Activated naive CD4-positive, alpha-beta T cell treated with anti-CD3 and anti-CD28 coated beads for 36 hours (primary cell): ENCODE measurements at regions of chr13 and their contacts with region 1.

Region 1: GRCh38 chr13:30802953-30803478 is 67.7 kb downstream of the ALOX5AP start:
- DNase-seq: peak; percentile 88
- H3K4me3 Mint-ChIP-seq: peak overlapping the region; percentile 38
- H3K27ac Mint-ChIP-seq: no peak overlapping the region
- H3K4me1 Mint-ChIP-seq: peaks cover 5% of the 10 kb centered on the region
- H3K27me3 Mint-ChIP-seq: no peaks in the 10 kb centered on the region

Region 2: GRCh38 chr13:29884671-29885430 is 918.2 kb before region 1 on chr13:
- CTCF ChIA-PET with region 1: no interaction called
- intact Hi-C with region 1: no loop called
- DNase-seq: no peak
- H3K4me3 Mint-ChIP-seq: no peak overlapping the region
- H3K27ac Mint-ChIP-seq: no peak overlapping the region
- H3K4me1 Mint-ChIP-seq: peaks cover 2% of the 10 kb centered on the region
- H3K27me3 Mint-ChIP-seq: no peaks in the 10 kb centered on the region

Region 3: DNA sequence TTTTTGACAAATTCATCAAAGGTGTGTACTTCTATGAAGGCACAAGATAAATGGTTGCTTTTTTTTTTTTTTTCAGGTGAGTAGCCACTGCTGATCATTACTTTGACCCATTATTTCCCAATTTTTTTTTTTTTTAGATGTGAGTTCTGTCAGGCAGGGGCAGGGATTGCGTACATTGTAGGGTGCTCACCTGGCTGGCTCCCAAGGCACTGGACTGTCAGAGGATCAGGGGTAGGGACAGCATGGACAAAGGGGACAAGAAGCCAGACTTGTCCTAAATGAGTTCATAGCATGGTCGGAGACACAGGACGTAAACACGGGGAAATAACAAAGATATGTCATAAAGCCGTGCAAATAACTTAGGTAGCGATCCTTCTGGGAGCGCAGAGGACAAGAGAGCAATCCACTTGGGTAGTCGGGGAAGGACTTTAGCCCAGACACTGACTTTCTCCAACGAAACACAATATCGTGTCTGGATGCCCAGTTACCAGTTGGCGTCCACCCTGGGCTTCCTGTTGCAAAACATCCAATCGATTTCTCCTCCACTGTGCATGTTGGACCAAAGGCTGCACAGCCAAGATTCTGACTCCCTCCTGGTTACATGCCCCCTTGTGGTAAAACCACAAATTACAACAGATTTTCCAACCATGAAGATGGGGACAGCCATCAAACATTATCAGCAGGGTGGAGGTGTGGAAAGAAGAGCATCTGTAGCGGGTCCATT is 468.2 kb before region 1 on chr13:
- CTCF ChIA-PET with region 1: no interaction called
- intact Hi-C with region 1: loop called (anchors 1 kb)
- DNase-seq: peak; percentile 21
- H3K4me3 Mint-ChIP-seq: no peak overlapping the region
- H3K27ac Mint-ChIP-seq: no peak overlapping the region
- H3K4me1 Mint-ChIP-seq: peaks cover 4% of the 10 kb centered on the region
- H3K27me3 Mint-ChIP-seq: no peaks in the 10 kb centered on the region

Region 4: DNA sequence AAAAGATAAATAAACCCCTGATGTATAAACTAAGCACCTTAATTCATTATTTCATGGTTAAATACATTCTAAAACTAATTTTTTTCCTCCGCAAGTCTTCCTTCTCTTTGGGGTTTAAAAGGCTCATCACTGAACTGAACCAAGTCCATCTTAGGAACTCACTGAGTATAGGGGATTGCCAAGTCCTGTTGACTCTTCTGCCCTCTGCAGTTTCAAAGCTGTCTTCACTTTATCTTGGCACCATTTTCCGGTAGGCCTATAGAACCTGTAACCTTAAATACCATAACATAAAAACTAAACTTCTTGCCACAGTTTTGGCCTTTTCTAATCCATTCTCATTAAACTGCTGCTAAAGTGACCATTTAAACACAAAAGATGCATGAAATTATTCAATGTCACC is 251.8 kb before region 1 on chr13:
- CTCF ChIA-PET with region 1: no interaction called
- intact Hi-C with region 1: loop called (anchors 1 kb)
- DNase-seq: peak; percentile 30
- H3K4me3 Mint-ChIP-seq: no peak overlapping the region
- H3K27ac Mint-ChIP-seq: no peak overlapping the region
- H3K4me1 Mint-ChIP-seq: peaks cover 2% of the 10 kb centered on the region
- H3K27me3 Mint-ChIP-seq: no peaks in the 10 kb centered on the region

Region 5: DNA sequence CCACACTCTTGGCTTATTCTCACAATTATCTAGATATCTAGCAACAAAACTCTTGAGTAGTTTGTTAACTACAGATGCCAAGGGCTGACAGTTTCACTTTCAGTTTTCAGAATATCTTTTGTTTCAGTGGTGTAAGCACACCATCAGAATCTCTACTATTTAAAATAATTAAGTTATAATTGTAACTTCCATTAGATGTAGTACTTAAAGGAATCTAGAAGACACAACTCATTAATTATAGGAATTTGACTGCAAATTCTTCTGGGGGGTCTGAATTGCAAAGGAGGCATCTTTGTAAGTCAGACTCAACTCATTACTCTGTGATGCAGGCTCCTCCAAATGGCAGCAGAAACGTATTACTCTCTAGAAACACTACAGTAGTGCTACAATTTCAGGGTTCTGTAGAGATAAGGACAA is 230.1 kb before region 1 on chr13:
- CTCF ChIA-PET with region 1: interaction called, 4 read pairs
- intact Hi-C with region 1: loop called (anchors 5 kb)
- DNase-seq: peak; percentile 29
- H3K4me3 Mint-ChIP-seq: peak overlapping the region; percentile 41
- H3K27ac Mint-ChIP-seq: peak overlapping the region; percentile 12
- H3K4me1 Mint-ChIP-seq: peaks cover 33% of the 10 kb centered on the region
- H3K27me3 Mint-ChIP-seq: no peaks in the 10 kb centered on the region

Region 6: DNA sequence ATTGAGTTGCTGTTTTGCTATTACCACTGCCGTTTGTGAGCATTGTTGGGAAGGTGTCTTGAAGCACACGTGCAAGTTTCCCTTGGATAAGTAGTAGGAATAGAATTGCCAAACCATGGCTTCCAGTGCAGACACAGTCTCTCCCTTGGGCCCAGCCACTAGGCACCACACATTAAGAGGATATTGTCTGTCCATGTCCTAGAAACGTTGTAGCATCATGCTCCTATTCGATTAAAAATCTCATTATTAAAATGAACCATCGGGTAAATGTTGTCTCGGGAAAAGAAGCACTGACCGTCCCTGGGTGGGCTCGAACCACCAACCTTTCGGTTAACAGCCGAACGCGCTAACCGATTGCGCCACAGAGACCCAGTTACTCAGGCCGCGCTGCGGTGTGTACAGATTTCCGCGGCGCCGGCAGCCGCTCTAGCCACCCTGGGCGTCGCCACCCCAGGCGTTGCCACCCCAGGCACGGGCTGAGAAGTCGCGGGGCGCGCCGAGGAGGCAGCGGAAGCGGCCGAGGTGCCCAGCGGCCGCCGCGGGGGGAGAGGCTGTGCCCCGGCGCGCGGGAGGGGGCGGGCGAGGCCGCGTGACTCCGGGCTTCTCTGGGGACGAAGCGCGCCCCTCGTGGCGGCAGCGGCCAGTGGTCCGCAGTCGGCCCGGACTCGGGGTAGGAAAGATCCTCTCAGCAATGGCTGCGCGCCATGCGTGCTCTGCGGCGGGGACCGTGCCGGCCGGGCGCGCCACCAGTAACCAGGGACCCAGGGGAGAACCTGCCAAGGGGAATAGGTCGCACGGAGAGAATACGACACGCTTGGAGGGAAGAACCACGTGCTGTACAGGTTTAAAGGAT is 129.1 kb before region 1 on chr13:
- CTCF ChIA-PET with region 1: interaction called, 5 read pairs
- intact Hi-C with region 1: loop called (anchors 1 kb)
- DNase-seq: peak; percentile 84
- H3K4me3 Mint-ChIP-seq: peak overlapping the region; percentile 82
- H3K27ac Mint-ChIP-seq: peak overlapping the region; percentile 41
- H3K4me1 Mint-ChIP-seq: peaks cover 8% of the 10 kb centered on the region
- H3K27me3 Mint-ChIP-seq: no peaks in the 10 kb centered on the region

Region 7: DNA sequence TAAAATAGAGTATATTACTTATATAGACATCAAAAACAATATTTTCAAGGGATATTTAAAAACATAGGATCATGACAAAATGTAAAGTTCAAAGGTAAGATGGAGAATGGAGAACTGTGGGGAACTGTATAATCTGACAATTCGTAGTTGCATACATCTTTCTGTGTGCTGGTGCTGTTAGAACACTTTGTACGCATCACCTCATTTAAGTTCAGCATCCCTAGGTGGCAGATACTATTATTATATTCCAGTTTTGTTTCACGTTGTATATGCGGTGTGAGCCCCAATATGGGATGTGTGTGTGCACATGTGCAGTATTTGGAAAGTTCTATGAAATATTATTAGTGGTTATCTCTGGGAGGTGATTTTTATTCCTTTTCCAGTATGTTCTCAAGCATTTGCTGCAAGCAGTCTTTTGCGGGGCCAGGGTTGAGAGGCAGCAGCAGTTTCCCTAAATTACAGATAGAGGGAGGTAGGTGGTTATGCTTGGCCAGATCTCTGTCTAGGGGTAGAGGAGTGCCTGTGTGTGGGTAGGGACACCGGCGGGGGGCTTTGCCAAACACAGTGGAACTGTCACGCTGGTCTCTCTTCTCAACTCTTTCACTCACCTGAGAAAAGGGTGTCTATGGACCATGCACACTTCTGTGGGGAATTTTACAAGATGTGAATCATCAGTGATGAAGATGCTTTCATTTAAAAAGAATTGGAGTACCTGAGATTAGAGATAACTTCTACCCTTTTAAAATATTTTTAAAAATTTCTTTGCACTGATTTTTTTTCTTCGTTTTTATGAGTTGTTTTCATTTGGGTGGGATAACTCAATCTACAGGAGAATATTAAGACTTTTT is 123.3 kb before region 1 on chr13:
- CTCF ChIA-PET with region 1: interaction called, 8 read pairs
- intact Hi-C with region 1: loop called (anchors 1 kb)
- DNase-seq: peak; percentile 54
- H3K4me3 Mint-ChIP-seq: no peak overlapping the region
- H3K27ac Mint-ChIP-seq: no peak overlapping the region
- H3K4me1 Mint-ChIP-seq: peaks cover 4% of the 10 kb centered on the region
- H3K27me3 Mint-ChIP-seq: no peaks in the 10 kb centered on the region

Region 8: GRCh38 chr13:30865123-30866049 is 62.4 kb after region 1 on chr13:
- CTCF ChIA-PET with region 1: interaction called, 9 read pairs
- intact Hi-C with region 1: loop called (anchors 1 kb)
- DNase-seq: peak; percentile 64
- H3K4me3 Mint-ChIP-seq: no peak overlapping the region
- H3K27ac Mint-ChIP-seq: no peak overlapping the region
- H3K4me1 Mint-ChIP-seq: peaks cover 3% of the 10 kb centered on the region
- H3K27me3 Mint-ChIP-seq: peaks cover 8% of the 10 kb centered on the region

Region 9: GRCh38 chr13:31145417-31145816 is 342.4 kb after region 1 on chr13:
- CTCF ChIA-PET with region 1: no interaction called
- intact Hi-C with region 1: no loop called
- DNase-seq: no peak
- H3K4me3 Mint-ChIP-seq: no peak overlapping the region
- H3K27ac Mint-ChIP-seq: no peak overlapping the region
- H3K4me1 Mint-ChIP-seq: peaks cover 10% of the 10 kb centered on the region
- H3K27me3 Mint-ChIP-seq: no peaks in the 10 kb centered on the region